ENCODE measurements at regions of chr19 and their contacts with region 1.

Region 1: DNA sequence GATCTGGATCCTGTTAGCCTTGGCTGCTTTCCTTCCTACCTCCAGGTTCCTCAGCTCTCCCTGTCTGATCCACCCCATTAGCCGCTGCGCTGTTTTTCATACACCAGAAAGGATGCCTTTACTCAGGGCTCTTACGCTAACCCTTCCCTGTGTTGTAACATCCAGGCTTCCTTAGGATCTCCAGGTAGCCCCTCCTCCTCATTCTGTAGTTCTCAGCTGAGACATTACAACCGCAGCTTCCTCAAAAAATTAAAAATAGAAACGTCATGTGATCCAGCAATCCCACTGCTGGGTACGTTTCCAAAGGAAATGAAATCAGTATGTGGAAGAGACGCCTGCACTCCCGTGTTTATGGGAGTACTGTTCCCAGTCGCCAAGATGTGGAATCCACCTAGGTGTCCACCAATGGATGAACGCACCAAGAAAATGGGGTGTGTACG is 18.4 kb upstream of the MYADM start:
- DNase-seq: no peak
- ATAC-seq: no peak
- H3K4me3 ChIP-seq: no peak overlapping the region
- H3K27ac ChIP-seq: peak overlapping the region; percentile 32; the same call in 1 of the 2 replicates
- H3K4me1 ChIP-seq: no peaks in the 10 kb centered on the region
- H3K27me3 ChIP-seq: no peaks in the 10 kb centered on the region
- CTCF ChIP-seq: no peak

Region 2: GRCh38 chr19:53671663-53672062 is 177.6 kb before region 1 on chr19:
- CTCF ChIA-PET with region 1: no interaction called
- POLR2A ChIA-PET with region 1: no interaction called
- in situ Hi-C with region 1: no loop called
- intact Hi-C with region 1: no loop called
- DNase-seq: no peak
- ATAC-seq: no peak
- H3K4me3 ChIP-seq: no peak overlapping the region
- H3K27ac ChIP-seq: no peak overlapping the region
- H3K4me1 ChIP-seq: no peaks in the 10 kb centered on the region
- H3K27me3 ChIP-seq: 0 out of 2 replicates have a peak, but pooled peaks cover under 1% of the 10 kb centered on the region
- CTCF ChIP-seq: no peak

Region 3: DNA sequence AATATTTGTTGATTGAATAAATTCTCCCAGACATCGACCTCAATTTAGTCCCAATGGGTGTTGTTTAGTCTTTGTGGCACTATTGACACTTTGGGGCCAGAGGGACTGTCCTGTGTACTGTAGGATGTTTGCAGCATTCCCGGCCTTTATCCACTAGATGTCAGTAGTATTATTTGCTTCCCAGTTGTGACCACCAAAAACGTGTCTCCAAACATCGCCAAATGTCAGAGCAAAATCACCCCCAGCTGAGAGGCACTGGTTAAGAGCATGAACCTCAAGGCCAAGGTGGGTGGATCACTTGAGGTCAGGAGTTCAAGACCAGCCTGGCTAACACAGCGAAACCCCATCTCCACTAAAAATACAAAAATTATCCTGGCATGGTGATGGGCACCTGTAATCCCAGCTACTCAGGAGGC is 40.5 kb before region 1 on chr19:
- CTCF ChIA-PET with region 1: no interaction called
- POLR2A ChIA-PET with region 1: interaction called, 14 read pairs
- in situ Hi-C with region 1: no loop called
- intact Hi-C with region 1: no loop called
- DNase-seq: peak; percentile 33
- ATAC-seq: peak; percentile 91
- H3K4me3 ChIP-seq: no peak overlapping the region
- H3K27ac ChIP-seq: no peak overlapping the region
- H3K4me1 ChIP-seq: no peaks in the 10 kb centered on the region
- H3K27me3 ChIP-seq: no peaks in the 10 kb centered on the region
- CTCF ChIP-seq: peak; percentile 63; the same call in 1 of the 2 replicates

Region 4: GRCh38 chr19:53906211-53907192 is 57.2 kb after region 1 on chr19:
- CTCF ChIA-PET with region 1: interaction called, 4 read pairs
- POLR2A ChIA-PET with region 1: no interaction called
- in situ Hi-C with region 1: loop called (anchors 10 kb)
- intact Hi-C with region 1: no loop called
- DNase-seq: no peak
- ATAC-seq: peak; percentile 47
- H3K4me3 ChIP-seq: peak overlapping the region; percentile 33 to 53
- H3K27ac ChIP-seq: peak overlapping the region; percentile 36; the same call in 1 of the 2 replicates
- H3K4me1 ChIP-seq: peaks cover 23% of the 10 kb centered on the region
- H3K27me3 ChIP-seq: no peaks in the 10 kb centered on the region
- CTCF ChIP-seq: peak; percentile 99

Region 5: GRCh38 chr19:53982611-53983010 is 133.4 kb after region 1 on chr19:
- CTCF ChIA-PET with region 1: no interaction called
- POLR2A ChIA-PET with region 1: no interaction called
- in situ Hi-C with region 1: no loop called
- intact Hi-C with region 1: loop called (anchors 10 kb)
- DNase-seq: no peak
- ATAC-seq: no peak
- H3K4me3 ChIP-seq: 0 out of 4 replicates have a peak overlapping the region, but pooled peaks of 1 of the 2 experiments have one; percentile 8
- H3K27ac ChIP-seq: no peak overlapping the region
- H3K4me1 ChIP-seq: peaks cover 29% of the 10 kb centered on the region
- H3K27me3 ChIP-seq: no peaks in the 10 kb centered on the region
- CTCF ChIP-seq: no peak